GM10248 (cell line): ENCODE measurements at regions of chr18 and their contacts with region 1.

Region 1: DNA sequence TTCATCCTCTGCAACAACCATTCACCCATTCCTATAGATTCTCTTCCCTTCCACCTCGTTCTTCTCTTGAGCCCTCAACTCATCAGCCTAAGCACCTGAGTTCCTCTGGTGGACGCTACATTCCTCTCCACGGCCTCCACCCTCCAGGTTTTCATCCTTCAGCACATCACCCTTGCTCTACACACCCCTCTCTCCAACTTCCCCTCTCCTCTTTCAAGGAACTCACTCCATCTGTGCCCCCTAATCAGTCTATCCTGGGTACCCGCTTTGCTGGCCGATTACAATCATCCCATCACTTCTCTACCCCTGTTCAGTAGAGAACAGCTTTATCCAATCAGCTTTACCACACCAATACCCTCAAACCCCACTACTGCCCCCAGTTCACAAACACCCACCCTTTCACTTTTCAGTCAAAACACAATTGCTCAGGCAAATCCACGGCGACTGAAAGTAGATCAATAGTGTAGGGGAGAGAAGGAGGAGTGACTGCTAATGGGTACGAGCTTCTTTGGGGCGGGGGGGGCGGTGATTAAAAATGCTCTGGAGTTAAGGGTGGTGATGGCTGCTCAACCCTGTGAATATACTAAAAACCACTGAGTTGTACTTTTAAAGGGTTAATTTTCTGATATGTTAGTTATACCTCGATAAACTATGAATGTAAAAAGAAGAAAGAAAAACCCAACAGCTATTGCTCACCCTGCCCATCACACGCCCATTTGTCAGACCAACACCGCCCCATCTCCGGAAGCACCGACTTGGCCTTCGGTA is 857 bp downstream of the DYM start:
- DNase-seq: peak; percentile 51
- CTCF ChIP-seq: no peak

Region 2: DNA sequence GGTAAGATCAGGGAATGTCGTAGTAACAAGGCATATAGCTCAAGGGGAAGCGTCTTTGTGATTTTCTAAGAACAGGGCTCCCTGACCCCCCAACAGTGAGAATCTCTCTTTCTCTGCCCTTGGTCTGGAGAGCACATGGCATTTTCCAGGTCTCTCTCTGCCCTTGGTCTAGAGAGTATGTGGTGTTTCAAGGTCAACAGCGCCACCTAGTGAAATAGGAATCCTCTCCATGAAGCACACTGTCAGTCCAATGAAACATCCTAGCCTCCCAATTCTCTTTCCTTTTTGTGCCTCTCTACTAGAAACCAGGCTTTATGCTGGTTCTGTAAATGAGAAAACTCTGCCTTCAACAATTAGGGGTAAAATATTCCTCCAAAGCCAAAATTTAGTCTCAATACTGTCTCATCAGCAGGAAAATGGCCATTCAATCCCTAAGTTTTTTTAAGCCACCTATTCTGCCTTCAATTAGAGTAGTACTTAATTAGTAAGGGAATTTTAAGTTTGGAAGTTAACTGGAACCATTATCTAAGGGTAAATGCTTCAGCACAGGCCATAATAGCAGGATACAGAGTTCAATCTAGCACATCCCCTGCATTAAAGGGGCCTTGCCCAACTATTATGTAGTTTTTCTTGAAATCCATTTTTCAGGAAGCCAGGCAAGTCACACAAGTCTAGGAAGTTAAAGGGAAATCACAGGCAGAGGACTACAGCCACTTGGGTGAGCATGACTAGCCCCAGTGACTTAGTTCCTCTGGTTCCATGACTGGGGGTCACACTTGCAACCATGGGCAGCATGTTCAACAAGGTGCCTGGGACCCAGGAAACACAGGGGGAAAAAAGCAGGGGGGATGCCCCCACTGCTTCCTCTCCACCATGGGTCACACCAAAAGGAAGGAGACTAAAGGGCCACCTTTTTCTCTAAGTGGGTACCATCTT is 11.5 kb before region 1 on chr18:
- CTCF ChIA-PET with region 1: interaction called, 15 read pairs
- POLR2A ChIA-PET with region 1: interaction called, 7 read pairs
- DNase-seq: no peak
- CTCF ChIP-seq: peak; percentile 40

Region 3: GRCh38 chr18:49486953-49487710 is 27.5 kb after region 1 on chr18 and contains the start of gene C18orf32:
- CTCF ChIA-PET with region 1: interaction called, 6 read pairs
- POLR2A ChIA-PET with region 1: interaction called, 12 read pairs
- DNase-seq: peak; percentile 92
- CTCF ChIP-seq: no peak

Region 4: GRCh38 chr18:49618742-49619681 is 159.4 kb after region 1 on chr18:
- CTCF ChIA-PET with region 1: no interaction called
- POLR2A ChIA-PET with region 1: no interaction called
- DNase-seq: no peak
- CTCF ChIP-seq: no peak

Region 5: DNA sequence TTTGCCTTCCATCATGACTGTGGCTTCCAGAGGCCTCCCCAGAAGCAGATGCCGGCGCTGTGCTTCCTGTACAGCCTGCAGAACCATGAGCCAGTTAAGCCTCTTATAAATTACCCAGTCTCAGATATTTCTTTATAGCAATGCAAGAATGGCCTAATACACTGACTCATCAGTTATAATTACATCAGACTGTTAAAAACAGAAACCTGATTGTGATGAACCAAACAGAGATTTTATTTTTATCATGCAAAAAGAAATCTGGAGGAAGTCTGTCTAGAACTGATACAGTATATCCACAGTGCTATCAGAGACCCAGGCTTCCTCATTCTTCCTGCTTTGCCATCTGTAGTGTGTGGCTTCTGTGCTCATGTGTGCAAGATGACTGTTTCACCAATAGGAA is 1831.3 kb after region 1 on chr18:
- CTCF ChIA-PET with region 1: no interaction called
- POLR2A ChIA-PET with region 1: no interaction called
- DNase-seq: no peak
- CTCF ChIP-seq: no peak